ENCODE measurements at regions of chr4 and their contacts with region 1.

Region 1: GRCh38 chr4:105146276-105147015 is at the start of gene TET2:
- DNase-seq: peak; percentile 91
- ATAC-seq: peak; percentile 85
- H3K4me3 Mint-ChIP-seq: peak within 1 kb of the TSS; percentile 91
- H3K27ac Mint-ChIP-seq: peak within 1 kb of the TSS; percentile 100
- H3K4me1 Mint-ChIP-seq: peaks cover 36% of the 10 kb centered on the region
- H3K27me3 Mint-ChIP-seq: no peaks in the 10 kb centered on the region
- CTCF ChIP-seq: no peak
- total RNA-seq, gene TET2: 31.3 to 36.0 TPM

Region 2: GRCh38 chr4:104930298-104930697 is 216.1 kb before region 1 on chr4:
- CTCF ChIA-PET with region 1: no interaction called
- POLR2A ChIA-PET with region 1: interaction called, 3 read pairs
- intact Hi-C with region 1: loop called (anchors 10 kb)
- DNase-seq: no peak
- ATAC-seq: no peak
- H3K4me3 Mint-ChIP-seq: no peak overlapping the region
- H3K27ac Mint-ChIP-seq: no peak overlapping the region
- H3K4me1 Mint-ChIP-seq: peaks cover 40% of the 10 kb centered on the region
- H3K27me3 Mint-ChIP-seq: no peaks in the 10 kb centered on the region
- CTCF ChIP-seq: no peak

Region 3: DNA sequence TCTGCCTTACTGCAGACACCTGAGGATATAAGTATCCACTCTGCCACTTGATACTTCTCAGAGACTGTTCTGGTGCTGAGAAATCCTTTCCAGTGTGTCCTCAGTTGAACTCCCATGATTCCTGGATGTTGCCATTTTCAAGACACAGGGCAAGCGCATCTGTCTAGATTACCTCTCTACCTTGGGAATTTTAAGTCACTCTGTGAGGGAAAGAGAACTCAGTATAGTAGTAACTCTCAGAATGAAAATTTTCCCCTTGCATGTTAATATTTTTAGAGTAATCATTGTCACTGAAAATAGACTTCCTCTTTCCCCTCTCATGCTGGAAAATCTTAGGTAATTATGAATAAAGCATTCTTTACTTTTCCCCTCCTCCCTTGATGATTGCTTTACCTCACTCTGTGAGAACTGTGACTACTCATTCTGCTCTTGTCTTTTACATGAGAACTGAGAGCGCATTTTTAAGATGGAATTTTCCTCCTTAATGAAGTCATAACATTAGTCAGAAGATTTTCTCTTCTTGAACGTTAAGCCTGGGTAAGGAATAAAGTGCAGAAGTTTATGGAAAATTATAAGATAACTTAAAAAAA is 45.3 kb after region 1 on chr4:
- CTCF ChIA-PET with region 1: interaction called, 3 read pairs
- POLR2A ChIA-PET with region 1: interaction called, 3 read pairs
- intact Hi-C with region 1: loop called (anchors 2 kb)
- DNase-seq: no peak
- ATAC-seq: peak; percentile 71
- H3K4me3 Mint-ChIP-seq: peak overlapping the region; percentile 4
- H3K27ac Mint-ChIP-seq: peak overlapping the region; percentile 87
- H3K4me1 Mint-ChIP-seq: peaks cover 87% of the 10 kb centered on the region
- H3K27me3 Mint-ChIP-seq: no peaks in the 10 kb centered on the region
- CTCF ChIP-seq: no peak

Region 4: DNA sequence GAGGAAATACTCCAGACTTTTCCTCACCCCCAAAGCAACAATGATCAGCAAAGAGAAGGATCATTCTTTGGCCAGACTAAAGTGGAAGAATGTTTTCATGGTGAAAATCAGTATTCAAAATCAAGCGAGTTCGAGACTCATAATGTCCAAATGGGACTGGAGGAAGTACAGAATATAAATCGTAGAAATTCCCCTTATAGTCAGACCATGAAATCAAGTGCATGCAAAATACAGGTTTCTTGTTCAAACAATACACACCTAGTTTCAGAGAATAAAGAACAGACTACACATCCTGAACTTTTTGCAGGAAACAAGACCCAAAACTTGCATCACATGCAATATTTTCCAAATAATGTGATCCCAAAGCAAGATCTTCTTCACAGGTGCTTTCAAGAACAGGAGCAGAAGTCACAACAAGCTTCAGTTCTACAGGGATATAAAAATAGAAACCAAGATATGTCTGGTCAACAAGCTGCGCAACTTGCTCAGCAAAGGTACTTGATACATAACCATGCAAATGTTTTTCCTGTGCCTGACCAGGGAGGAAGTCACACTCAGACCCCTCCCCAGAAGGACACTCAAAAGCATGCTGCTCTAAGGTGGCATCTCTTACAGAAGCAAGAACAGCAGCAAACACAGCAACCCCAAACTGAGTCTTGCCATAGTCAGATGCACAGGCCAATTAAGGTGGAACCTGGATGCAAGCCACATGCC is 89.9 kb after region 1 on chr4:
- CTCF ChIA-PET with region 1: no interaction called
- POLR2A ChIA-PET with region 1: no interaction called
- intact Hi-C with region 1: no loop called
- DNase-seq: no peak
- ATAC-seq: no peak
- H3K4me3 Mint-ChIP-seq: no peak overlapping the region
- H3K27ac Mint-ChIP-seq: no peak overlapping the region
- H3K4me1 Mint-ChIP-seq: peaks cover 13% of the 10 kb centered on the region
- H3K27me3 Mint-ChIP-seq: no peaks in the 10 kb centered on the region
- CTCF ChIP-seq: no peak

Region 5: GRCh38 chr4:105306158-105306781 is 159.8 kb after region 1 on chr4:
- CTCF ChIA-PET with region 1: no interaction called
- POLR2A ChIA-PET with region 1: interaction called, 7 read pairs
- intact Hi-C with region 1: loop called (anchors 2 kb)
- DNase-seq: peak; percentile 86
- ATAC-seq: peak; percentile 83
- H3K4me3 Mint-ChIP-seq: no peak overlapping the region
- H3K27ac Mint-ChIP-seq: peak overlapping the region; percentile 92
- H3K4me1 Mint-ChIP-seq: peaks cover 25% of the 10 kb centered on the region
- H3K27me3 Mint-ChIP-seq: no peaks in the 10 kb centered on the region
- CTCF ChIP-seq: no peak